Activated naive CD4-positive, alpha-beta T cell treated with anti-CD3 and anti-CD28 coated beads for 36 hours (primary cell): ENCODE measurements at regions of chr5 and their contacts with region 1.

Region 1: GRCh38 chr5:97162045-97162444 is 19.6 kb upstream of the LIX1 start:
- DNase-seq: peak; percentile 76
- H3K4me3 Mint-ChIP-seq: no peak overlapping the region
- H3K27ac Mint-ChIP-seq: no peak overlapping the region
- H3K4me1 Mint-ChIP-seq: peaks cover 17% of the 10 kb centered on the region
- H3K27me3 Mint-ChIP-seq: no peaks in the 10 kb centered on the region

Region 2: DNA sequence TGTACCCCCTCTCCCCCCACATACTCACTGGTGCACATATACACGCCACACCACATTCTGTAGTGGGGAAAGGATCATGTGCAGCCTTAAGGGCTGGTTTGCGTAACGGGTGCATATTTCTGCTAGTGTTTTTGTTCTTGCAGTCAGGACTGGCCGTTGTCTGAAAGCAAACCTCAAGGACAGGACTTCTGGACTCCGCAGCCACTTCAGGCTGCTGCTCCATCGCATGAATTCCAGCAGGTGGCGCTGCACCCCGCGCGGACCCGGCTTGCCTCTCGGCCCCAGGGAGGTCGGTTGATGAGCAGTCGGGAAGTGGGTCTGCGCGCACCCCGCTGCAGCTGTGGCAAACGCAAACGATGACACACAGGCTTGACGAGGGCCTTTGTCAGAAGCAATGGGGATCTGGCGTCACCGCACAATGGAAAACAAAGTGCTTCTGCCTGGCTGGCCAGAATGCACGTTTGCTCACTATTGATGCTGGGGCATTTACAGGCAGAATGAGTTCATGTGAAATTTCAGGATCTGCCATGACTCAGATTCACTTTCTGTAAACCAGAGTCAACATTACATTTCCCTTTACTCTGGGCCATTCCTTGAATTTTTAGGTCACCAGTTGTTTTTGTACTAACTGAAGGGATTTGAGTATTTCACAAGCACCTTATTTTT is 1303.3 kb before region 1 on chr5:
- CTCF ChIA-PET with region 1: no interaction called
- intact Hi-C with region 1: loop called (anchors 10 kb)
- DNase-seq: peak; percentile 98
- H3K4me3 Mint-ChIP-seq: peak overlapping the region; percentile 30
- H3K27ac Mint-ChIP-seq: peak overlapping the region; percentile 83
- H3K4me1 Mint-ChIP-seq: peaks cover 52% of the 10 kb centered on the region
- H3K27me3 Mint-ChIP-seq: no peaks in the 10 kb centered on the region

Region 3: DNA sequence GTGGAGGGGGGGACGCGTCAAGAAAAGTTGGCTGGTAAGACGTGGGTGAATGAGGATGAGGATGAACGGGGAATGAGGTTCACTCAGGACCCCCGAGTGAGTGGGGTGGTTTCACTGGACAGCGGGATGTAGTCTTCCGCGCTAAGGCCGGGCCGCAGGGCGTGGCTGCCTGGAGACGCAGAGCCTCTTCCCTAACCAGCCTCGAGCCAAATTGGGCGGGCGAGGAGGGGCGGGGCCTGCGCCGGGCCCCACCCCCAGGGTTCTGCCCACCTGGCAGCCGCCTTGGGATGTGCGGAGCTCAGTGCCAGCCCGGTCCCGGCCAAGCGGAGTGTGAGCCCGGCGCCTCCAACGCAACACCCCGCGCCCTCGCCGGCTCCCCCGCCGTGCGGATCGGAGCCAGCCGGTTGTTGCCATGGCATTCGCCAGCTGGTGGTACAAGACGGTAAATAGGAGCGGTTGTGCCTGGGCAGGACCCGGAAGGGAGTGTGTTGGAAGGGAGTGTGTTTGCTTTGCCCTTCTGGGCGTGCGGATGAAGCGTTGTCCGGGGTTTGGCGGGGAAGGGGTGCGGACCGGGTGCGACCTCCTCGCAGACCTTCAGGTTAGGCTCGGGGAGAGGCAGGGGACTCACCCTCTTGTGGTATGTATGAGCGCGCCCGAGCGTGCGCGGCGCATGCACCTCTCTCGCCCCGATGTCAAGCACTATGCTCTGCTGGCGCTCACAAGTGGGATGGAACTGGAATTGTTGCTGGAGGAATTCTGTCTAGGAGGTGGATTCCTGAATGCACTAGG is 499.1 kb before region 1 on chr5:
- CTCF ChIA-PET with region 1: no interaction called
- intact Hi-C with region 1: loop called (anchors 2 kb)
- DNase-seq: peak; percentile 89
- H3K4me3 Mint-ChIP-seq: peak overlapping the region; percentile 96
- H3K27ac Mint-ChIP-seq: peak overlapping the region; percentile 96
- H3K4me1 Mint-ChIP-seq: peaks cover 22% of the 10 kb centered on the region
- H3K27me3 Mint-ChIP-seq: peaks cover 3% of the 10 kb centered on the region

Region 4: GRCh38 chr5:96763026-96763425 is 399.0 kb before region 1 on chr5:
- CTCF ChIA-PET with region 1: interaction called, 13 read pairs
- intact Hi-C with region 1: no loop called
- DNase-seq: no peak
- H3K4me3 Mint-ChIP-seq: no peak overlapping the region
- H3K27ac Mint-ChIP-seq: no peak overlapping the region
- H3K4me1 Mint-ChIP-seq: no peaks in the 10 kb centered on the region
- H3K27me3 Mint-ChIP-seq: no peaks in the 10 kb centered on the region

Region 5: GRCh38 chr5:96896806-96897205 is 265.2 kb before region 1 on chr5:
- CTCF ChIA-PET with region 1: interaction called, 4 read pairs
- intact Hi-C with region 1: loop called (anchors 1 kb)
- DNase-seq: peak; percentile 79
- H3K4me3 Mint-ChIP-seq: peak overlapping the region; percentile 79
- H3K27ac Mint-ChIP-seq: peak overlapping the region; percentile 98
- H3K4me1 Mint-ChIP-seq: peaks cover 62% of the 10 kb centered on the region
- H3K27me3 Mint-ChIP-seq: no peaks in the 10 kb centered on the region

Region 6: GRCh38 chr5:97133101-97133500 is 28.9 kb before region 1 on chr5:
- CTCF ChIA-PET with region 1: interaction called, 10 read pairs
- intact Hi-C with region 1: no loop called
- DNase-seq: no peak
- H3K4me3 Mint-ChIP-seq: no peak overlapping the region
- H3K27ac Mint-ChIP-seq: no peak overlapping the region
- H3K4me1 Mint-ChIP-seq: peaks cover 5% of the 10 kb centered on the region
- H3K27me3 Mint-ChIP-seq: peaks cover 5% of the 10 kb centered on the region

Region 7: GRCh38 chr5:97183100-97183929 is 21.3 kb after region 1 on chr5 and contains the start of gene RIOK2:
- CTCF ChIA-PET with region 1: interaction called, 4 read pairs
- intact Hi-C with region 1: loop called (anchors 1 kb)
- DNase-seq: peak; percentile 97
- H3K4me3 Mint-ChIP-seq: peak within 1 kb of the TSS; percentile 93
- H3K27ac Mint-ChIP-seq: peak within 1 kb of the TSS; percentile 99
- H3K4me1 Mint-ChIP-seq: peaks cover 33% of the 10 kb centered on the region
- H3K27me3 Mint-ChIP-seq: no peaks in the 10 kb centered on the region
- total RNA-seq, gene RIOK2: 29.1 to 32.0 TPM